Naive thymus-derived CD4-positive, alpha-beta T cell (primary cell): ENCODE measurements at regions of chr11 and their contacts with region 1.

Region 1: DNA sequence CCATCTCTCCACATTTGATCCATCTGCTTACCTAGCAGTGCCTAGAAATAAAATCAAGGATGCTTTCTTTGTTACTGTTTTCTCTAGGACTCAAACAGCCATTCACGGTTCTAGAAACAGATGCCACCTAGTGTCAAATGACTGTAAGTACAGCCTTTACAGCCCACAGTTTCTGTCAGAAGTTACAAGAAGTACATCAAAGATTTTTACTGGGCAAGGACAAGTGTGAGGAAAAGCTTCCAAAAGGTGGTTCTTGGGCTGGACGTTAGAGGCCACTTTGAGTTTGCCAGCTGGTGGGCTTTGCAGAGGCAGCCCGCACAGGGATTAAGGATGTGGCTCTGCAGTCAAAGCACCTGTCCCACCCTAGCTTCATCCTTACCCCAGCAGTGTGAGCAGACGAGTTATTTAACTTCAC is 6.9 kb downstream of the KMT5B start:
- DNase-seq: peak in 7 of 9 donors; percentile 35 to 65 (median 55)
- ATAC-seq: peak; percentile 82
- H3K4me3 ChIP-seq: no peak overlapping the region
- H3K4me3 Mint-ChIP-seq: peak overlapping the region in 7 of 10 donors; percentile 5 to 60 (median 25)
- H3K27ac ChIP-seq: no peak overlapping the region
- H3K27ac Mint-ChIP-seq: peak overlapping the region in 5 of 9 donors; percentile 7 to 73 (median 43)
- H3K4me1 ChIP-seq: peaks cover 23 to 48% of the 10 kb centered on the region in 2 donors
- H3K4me1 Mint-ChIP-seq: peaks cover 38 to 91% (median 71%) of the 10 kb centered on the region in 7 donors
- H3K27me3 ChIP-seq: no peaks in the 10 kb centered on the region
- H3K27me3 Mint-ChIP-seq: no peaks in the 10 kb centered on the region

Region 2: GRCh38 chr11:68003846-68004550 is 202.2 kb before region 1 on chr11 and contains the start of gene UNC93B1:
- CTCF ChIA-PET with region 1: no interaction called
- POLR2A ChIA-PET with region 1: no interaction called
- intact Hi-C with region 1: loop called (anchors 1 to 10 kb)
- DNase-seq: peak; percentile 54 to 85 (median 69)
- ATAC-seq: peak; percentile 93
- H3K4me3 ChIP-seq: peak within 1 kb of the TSS; percentile 64
- H3K4me3 Mint-ChIP-seq: peak within 1 kb of the TSS; percentile 82 to 93 (median 86)
- H3K27ac ChIP-seq: peak within 1 kb of the TSS; percentile 66
- H3K27ac Mint-ChIP-seq: peak within 1 kb of the TSS; percentile 74 to 92 (median 85)
- H3K4me1 ChIP-seq: peaks cover 6 to 8% of the 10 kb centered on the region in 2 donors
- H3K4me1 Mint-ChIP-seq: peaks cover 0 to 24% (median 20%) of the 10 kb centered on the region in 7 donors
- H3K27me3 ChIP-seq: no peaks in the 10 kb centered on the region
- H3K27me3 Mint-ChIP-seq: no peaks in the 10 kb centered on the region
- total RNA-seq, gene UNC93B1: 10.1 to 76.3 (median 21.1) TPM

Region 3: DNA sequence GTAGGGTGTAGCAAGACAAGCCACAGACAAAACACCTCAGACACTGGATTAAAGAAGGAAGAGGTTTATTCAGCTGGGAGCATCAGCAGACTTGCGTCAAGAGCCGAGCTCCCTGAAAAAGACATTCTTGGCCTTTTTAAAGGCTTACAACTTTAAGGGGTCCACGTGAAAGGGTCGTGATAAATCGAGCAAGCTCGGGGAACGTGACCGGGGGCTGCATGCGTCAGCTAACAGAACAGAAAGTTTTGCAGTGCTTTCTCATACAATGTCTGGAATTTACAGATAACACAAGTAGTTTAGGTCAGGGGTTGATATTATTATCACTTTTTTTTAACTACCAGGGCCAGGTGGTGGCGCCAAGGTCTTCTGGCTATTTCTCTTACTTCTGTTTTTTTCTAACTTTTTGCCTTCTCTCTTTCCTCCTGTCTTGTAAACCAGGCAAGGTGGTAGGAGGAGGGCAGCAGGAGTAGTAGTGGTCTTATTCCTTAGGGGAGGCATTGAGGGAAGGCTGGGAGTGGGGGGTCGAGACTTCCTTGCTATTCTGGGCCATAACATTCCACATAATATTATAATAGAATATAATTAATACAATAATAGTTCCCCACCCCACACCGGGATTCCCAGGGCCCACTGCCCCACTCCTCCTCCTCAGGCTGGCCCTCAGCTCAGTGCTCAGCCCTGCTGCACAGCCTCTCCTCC is 196.7 kb before region 1 on chr11:
- CTCF ChIA-PET with region 1: no interaction called
- POLR2A ChIA-PET with region 1: no interaction called
- intact Hi-C with region 1: loop called (anchors 1 to 10 kb)
- DNase-seq: no peak
- ATAC-seq: no peak
- H3K4me3 ChIP-seq: no peak overlapping the region
- H3K4me3 Mint-ChIP-seq: peak overlapping the region in 2 of 10 donors; percentile 17 to 21
- H3K27ac ChIP-seq: no peak overlapping the region
- H3K27ac Mint-ChIP-seq: peak overlapping the region in 1 of 9 donors; percentile 37
- H3K4me1 ChIP-seq: peaks cover under 1 to 3% of the 10 kb centered on the region in 2 donors
- H3K4me1 Mint-ChIP-seq: peaks cover 9 to 20% (median 17%) of the 10 kb centered on the region in 7 donors
- H3K27me3 ChIP-seq: no peaks in the 10 kb centered on the region
- H3K27me3 Mint-ChIP-seq: peaks cover 0 to 11% (median 0%) of the 10 kb centered on the region in 5 donors